HepG2 (cell line): ENCODE measurements at regions of chr1 and their contacts with region 1.

Region 1: DNA sequence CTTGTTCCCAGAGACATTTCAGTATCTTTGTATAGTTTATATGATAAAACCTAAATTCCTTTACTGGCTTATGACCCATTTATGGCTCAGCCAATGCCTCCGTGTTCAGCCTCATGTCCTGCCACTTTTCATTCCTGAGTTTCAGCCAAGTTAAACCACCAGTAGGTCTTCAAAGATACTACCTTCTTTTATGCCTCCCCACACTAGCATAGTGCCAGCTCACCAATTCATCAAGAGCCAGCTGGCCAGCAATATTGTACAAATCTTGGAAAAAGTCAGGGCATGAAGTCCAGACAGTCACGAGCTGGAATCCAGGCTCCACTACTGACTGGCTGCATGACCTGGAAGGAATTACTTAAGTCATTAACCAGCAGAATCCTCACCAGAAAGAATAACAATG is 446.0 kb downstream of the GPATCH2 start:
- DNase-seq: no peak
- ATAC-seq: no peak
- H3K4me3 ChIP-seq: no peak overlapping the region
- H3K27ac ChIP-seq: no peak overlapping the region
- H3K4me1 ChIP-seq: no peaks in the 10 kb centered on the region
- H3K27me3 ChIP-seq: no peaks in the 10 kb centered on the region
- CTCF ChIP-seq: no peak
- EP300 ChIP-seq: no peak
- POLR2A ChIP-seq: no peak
- RAD21 ChIP-seq: no peak

Region 2: GRCh38 chr1:217134857-217135568 is 49.8 kb before region 1 on chr1:
- CTCF ChIA-PET with region 1: no interaction called
- POLR2A ChIA-PET with region 1: no interaction called
- in situ Hi-C with region 1: no loop called
- intact Hi-C with region 1: no loop called
- DNase-seq: no peak
- ATAC-seq: peak; percentile 66
- H3K4me3 ChIP-seq: no peak overlapping the region; a peak in 1 of 6 replicates
- H3K27ac ChIP-seq: no peak overlapping the region
- H3K4me1 ChIP-seq: no peaks in the 10 kb centered on the region
- H3K27me3 ChIP-seq: peaks cover 3 to 59% of the 10 kb centered on the region in 2 experiments
- CTCF ChIP-seq: no peak
- EP300 ChIP-seq: no peak
- POLR2A ChIP-seq: no peak
- RAD21 ChIP-seq: no peak

Region 3: GRCh38 chr1:218250492-218250891 is 1065.6 kb after region 1 on chr1:
- CTCF ChIA-PET with region 1: no interaction called
- POLR2A ChIA-PET with region 1: no interaction called
- in situ Hi-C with region 1: no loop called
- intact Hi-C with region 1: loop called (anchors 5 kb)
- DNase-seq: no peak
- ATAC-seq: no peak
- H3K4me3 ChIP-seq: no peak overlapping the region
- H3K27ac ChIP-seq: no peak overlapping the region
- H3K4me1 ChIP-seq: no peaks in the 10 kb centered on the region
- H3K27me3 ChIP-seq: no peaks in the 10 kb centered on the region; a peak in 1 of 5 replicates
- CTCF ChIP-seq: peak; percentile 33; the same call in 1 of the 2 replicates
- EP300 ChIP-seq: no peak
- POLR2A ChIP-seq: no peak
- RAD21 ChIP-seq: no peak